Heart right ventricle (tissue), 16 donors: ENCODE measurements at regions of chr10 and their contacts with region 1.

Region 1: DNA sequence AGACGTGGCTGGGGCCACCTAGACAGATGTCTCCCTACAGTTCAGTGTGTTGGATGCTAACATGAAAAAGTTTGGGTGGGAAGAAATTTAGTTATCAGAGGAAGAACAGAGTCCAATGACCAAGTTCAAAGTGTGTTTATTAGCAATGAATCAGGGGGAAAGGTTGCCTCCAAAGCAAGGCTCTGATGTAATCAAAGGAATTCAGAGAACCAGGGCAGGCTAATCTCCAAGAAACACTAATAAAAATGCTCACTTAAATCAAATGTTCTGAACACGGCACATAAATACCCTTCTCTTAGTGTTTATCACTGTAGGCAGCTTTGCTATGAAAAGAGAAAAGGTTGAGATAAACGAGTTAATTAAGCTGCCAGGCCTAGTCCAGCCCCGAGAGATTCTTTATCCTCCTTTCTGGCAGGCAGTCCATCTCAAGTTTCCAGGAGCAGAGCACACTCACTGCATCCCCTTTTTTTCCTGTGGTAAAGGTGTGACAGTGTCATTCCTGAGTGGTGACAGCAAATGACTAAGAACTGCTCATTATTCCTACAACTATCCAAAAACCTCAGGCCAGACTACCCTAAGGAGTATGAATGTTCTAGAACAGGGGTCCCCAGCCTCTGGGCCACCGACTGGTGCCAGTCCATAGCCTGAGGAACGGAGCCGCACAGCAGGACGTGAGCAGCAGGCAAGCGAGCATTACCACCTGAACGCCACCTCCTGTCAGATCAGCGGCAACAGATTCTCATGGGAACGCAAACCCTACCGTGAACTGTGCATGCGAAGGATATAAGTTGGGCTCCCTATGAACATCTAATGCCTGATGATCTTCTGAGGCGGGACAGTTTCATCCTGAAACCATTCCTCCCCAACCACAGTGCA is 66.9 kb upstream of the FHIP2A start:
- DNase-seq: no peak
- ATAC-seq: peak in 6 of 8 donors; percentile 18 to 52 (median 26)
- H3K4me3 ChIP-seq: no peak overlapping the region
- H3K27ac ChIP-seq: peak overlapping the region in 9 of 10 donors; percentile 9 to 82 (median 51)
- H3K4me1 ChIP-seq: peaks cover 7 to 89% (median 57%) of the 10 kb centered on the region in 9 donors
- H3K27me3 ChIP-seq: no peaks in the 10 kb centered on the region
- CTCF ChIP-seq: no peak

Region 2: DNA sequence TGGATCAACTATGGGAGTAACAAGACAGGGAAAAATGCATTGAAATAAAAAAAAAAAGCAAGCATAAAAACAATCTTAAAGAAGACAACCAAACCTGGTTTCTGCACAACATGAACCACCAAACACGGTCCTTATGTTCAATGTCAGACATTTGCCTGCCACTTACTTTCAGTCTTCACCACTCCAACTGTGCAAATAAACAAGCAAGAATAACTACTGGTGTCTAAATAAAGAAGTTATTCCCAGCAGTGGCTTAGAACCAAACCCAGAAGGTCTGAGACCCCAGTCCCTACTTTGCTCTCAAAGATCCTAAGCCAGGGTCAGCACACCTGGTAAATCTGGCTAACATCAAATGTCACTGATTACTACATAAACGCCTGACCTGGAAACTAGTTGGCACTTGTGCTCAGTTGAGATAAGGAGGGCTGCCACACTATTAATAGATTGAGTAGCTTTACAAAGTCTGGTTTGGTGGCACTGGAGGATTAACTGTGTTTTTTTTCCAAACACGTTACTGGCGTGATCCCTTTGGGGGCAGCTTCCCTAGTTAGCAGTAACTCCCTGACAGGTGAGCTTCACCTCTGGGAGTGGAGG is 33.9 kb before region 1 on chr10:
- intact Hi-C with region 1: loop called in 4 of 10 experiments (anchors 2 to 5 kb)
- DNase-seq: peak in 1 of 2 donors; percentile 56
- ATAC-seq: peak; percentile 48 to 87 (median 79)
- H3K4me3 ChIP-seq: no peak overlapping the region
- H3K27ac ChIP-seq: peak overlapping the region; percentile 70 to 93 (median 82)
- H3K4me1 ChIP-seq: peaks cover 3 to 91% (median 68%) of the 10 kb centered on the region in 9 donors
- H3K27me3 ChIP-seq: no peaks in the 10 kb centered on the region
- CTCF ChIP-seq: no peak

Region 3: DNA sequence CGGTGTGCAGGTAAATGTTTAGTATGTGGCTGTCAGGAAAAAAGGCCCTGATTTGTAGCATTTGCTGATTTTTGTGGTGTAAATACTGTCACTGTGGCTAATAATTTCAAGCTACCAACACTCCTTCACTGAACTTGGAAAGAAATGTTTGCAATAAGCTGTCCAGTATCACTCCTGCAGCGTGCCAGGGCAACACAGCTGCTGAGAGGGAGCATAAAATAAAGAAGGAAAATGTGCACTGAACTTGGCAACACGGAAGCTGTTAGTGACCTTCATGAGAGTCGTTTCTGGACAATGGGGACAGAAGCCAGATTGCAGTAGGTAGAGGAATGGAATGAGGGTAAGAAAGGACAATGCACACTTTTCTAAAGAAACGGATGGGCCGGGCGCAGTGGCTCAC is 29.0 kb after region 1 on chr10:
- intact Hi-C with region 1: no loop called
- DNase-seq: peak in 1 of 2 donors; percentile 24
- ATAC-seq: peak in 3 of 8 donors; percentile 26 to 71 (median 56)
- H3K4me3 ChIP-seq: no peak overlapping the region
- H3K27ac ChIP-seq: peak overlapping the region in 3 of 10 donors; percentile 8 to 40 (median 20)
- H3K4me1 ChIP-seq: peaks cover 0 to 48% (median 16%) of the 10 kb centered on the region in 9 donors
- H3K27me3 ChIP-seq: no peaks in the 10 kb centered on the region
- CTCF ChIP-seq: no peak